ENCODE measurements at regions of chr2 and their contacts with region 1.

Region 1: DNA sequence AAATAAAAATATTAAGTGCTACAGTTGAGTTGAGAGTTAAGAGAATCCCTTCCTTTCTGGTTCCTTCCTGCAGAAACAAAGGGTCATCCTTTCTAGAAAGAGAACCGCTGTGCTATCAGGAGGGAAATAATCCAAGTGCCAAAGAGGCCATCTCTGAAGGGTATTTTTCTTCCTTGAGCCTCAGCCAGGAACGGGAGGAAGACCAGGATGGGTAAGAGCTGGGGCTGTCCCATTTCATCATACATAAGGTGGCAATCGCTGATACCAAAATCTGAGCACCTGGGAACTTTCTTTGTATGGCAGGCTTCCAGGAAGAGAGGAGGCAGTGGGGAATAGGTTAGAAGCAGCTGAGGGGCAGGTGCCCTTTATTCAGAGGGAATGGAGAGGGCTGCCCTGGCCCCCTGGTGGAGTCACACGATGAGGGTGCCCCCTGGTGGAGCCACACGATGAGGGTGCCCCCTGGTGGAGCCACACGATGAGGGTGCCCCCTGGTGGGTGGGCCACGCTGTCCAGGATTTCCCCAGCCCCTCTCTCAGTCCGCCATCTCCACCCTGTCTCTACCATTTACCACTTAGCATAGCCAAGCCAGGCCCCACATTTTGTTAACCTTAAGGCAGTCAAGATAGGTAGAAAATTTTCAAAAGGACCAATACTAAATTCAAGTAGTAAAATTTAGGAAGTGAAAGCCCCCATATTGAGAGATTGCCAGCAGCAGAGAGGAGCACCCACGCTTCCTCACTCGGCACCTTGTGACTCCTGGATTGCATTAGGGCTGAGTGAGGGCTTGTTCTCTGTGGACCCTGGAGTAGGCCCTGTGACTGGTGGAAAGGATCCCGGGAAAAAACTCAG is 10.5 kb upstream of the FAM228A start:
- DNase-seq: peak; percentile 66 to 84
- H3K4me3 ChIP-seq: no peak overlapping the region
- H3K4me3 Mint-ChIP-seq: no peak overlapping the region
- H3K27ac Mint-ChIP-seq: no peak overlapping the region
- H3K4me1 ChIP-seq: no peaks in the 10 kb centered on the region
- H3K4me1 Mint-ChIP-seq: no peaks in the 10 kb centered on the region
- H3K27me3 ChIP-seq: no peaks in the 10 kb centered on the region; the same call in 1 of the 2 replicates
- H3K27me3 Mint-ChIP-seq: peaks cover 2% of the 10 kb centered on the region
- CTCF ChIP-seq: peak; percentile 93 to 99

Region 2: DNA sequence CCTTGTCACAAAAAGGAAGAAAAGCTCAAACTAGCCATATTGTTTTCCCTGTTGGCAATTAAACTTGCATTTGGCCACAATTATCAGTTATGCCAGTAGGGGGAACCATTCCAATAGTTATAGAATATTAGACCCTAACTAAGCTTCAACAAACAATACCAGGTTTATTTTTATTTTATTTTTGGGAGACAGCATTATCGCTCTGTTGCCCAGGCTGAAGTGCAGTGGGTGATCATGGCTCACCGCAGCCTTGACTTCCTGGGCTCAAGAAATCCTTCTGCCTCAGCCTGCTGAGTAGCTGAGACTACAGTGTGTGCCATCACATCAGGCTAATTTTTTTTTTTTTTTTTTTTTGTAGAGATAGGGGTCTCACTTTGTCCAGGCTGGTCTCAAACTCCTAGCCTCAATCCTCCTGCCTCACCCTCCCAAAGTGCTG is 339.6 kb before region 1 on chr2:
- CTCF ChIA-PET with region 1: no interaction called
- POLR2A ChIA-PET with region 1: no interaction called
- intact Hi-C with region 1: loop called (anchors 1 kb)
- DNase-seq: peak in 1 of 2 experiments; percentile 66
- H3K4me3 ChIP-seq: no peak overlapping the region
- H3K4me3 Mint-ChIP-seq: no peak overlapping the region
- H3K27ac Mint-ChIP-seq: no peak overlapping the region
- H3K4me1 ChIP-seq: no peaks in the 10 kb centered on the region
- H3K4me1 Mint-ChIP-seq: no peaks in the 10 kb centered on the region
- H3K27me3 ChIP-seq: no peaks in the 10 kb centered on the region
- H3K27me3 Mint-ChIP-seq: no peaks in the 10 kb centered on the region
- CTCF ChIP-seq: peak; percentile 72 to 74

Region 3: DNA sequence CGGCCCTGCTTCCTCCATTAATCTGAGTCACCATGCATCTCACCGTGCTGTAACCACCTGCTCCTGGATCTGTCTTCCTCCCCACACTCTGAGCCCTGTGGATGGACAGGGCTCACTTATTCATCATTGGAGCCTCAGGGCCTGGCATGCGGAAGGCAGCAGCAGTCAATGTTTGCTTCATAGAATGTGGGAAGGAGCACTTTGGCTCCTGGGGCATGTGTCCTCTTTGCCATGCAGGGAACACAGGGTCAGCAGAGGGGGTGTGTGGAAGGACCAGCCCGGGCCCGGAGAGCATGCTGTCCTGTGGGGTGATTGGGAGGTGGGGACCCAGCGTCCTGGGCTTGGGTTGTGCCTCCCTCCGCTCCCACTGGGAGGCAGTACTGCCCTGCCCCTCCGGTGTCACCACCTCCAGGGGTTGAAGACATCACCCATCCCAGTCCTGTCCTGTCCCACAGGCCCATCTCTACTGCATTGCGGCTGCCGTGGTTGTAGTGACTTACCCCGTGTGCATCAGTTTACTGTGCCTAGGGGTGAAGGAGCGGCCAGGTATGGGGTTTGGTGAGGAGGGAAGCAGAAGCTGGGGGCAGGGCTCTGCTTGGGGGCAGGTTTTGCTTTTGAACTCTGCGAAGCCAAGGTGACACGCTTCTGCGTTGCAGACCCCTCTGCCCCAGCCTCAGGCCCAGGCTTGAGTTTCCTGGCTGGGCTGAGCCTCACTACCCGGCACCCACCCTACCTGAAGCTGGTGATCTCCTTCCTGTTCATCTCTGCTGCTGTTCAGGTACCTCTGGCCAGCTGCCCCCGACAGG is 143.0 kb before region 1 on chr2:
- CTCF ChIA-PET with region 1: no interaction called
- POLR2A ChIA-PET with region 1: no interaction called
- intact Hi-C with region 1: loop called (anchors 1 kb)
- DNase-seq: peak in 1 of 2 experiments; percentile 66
- H3K4me3 ChIP-seq: no peak overlapping the region
- H3K4me3 Mint-ChIP-seq: no peak overlapping the region
- H3K27ac Mint-ChIP-seq: no peak overlapping the region
- H3K4me1 ChIP-seq: peaks cover 6% of the 10 kb centered on the region
- H3K4me1 Mint-ChIP-seq: peaks cover 2% of the 10 kb centered on the region
- H3K27me3 ChIP-seq: no peaks in the 10 kb centered on the region
- H3K27me3 Mint-ChIP-seq: no peaks in the 10 kb centered on the region
- CTCF ChIP-seq: peak; percentile 33 to 73

Region 4: GRCh38 chr2:24509425-24509824 is 345.1 kb after region 1 on chr2:
- CTCF ChIA-PET with region 1: no interaction called
- POLR2A ChIA-PET with region 1: no interaction called
- intact Hi-C with region 1: no loop called
- DNase-seq: no peak
- H3K4me3 ChIP-seq: no peak overlapping the region
- H3K4me3 Mint-ChIP-seq: no peak overlapping the region
- H3K27ac Mint-ChIP-seq: no peak overlapping the region
- H3K4me1 ChIP-seq: no peaks in the 10 kb centered on the region
- H3K4me1 Mint-ChIP-seq: peaks cover 7% of the 10 kb centered on the region
- H3K27me3 ChIP-seq: no peaks in the 10 kb centered on the region
- H3K27me3 Mint-ChIP-seq: no peaks in the 10 kb centered on the region
- CTCF ChIP-seq: no peak

Measured in Caco-2 (cell line).